Caco-2 (cell line): ENCODE measurements at regions of chr6 and their contacts with region 1.

Region 1: DNA sequence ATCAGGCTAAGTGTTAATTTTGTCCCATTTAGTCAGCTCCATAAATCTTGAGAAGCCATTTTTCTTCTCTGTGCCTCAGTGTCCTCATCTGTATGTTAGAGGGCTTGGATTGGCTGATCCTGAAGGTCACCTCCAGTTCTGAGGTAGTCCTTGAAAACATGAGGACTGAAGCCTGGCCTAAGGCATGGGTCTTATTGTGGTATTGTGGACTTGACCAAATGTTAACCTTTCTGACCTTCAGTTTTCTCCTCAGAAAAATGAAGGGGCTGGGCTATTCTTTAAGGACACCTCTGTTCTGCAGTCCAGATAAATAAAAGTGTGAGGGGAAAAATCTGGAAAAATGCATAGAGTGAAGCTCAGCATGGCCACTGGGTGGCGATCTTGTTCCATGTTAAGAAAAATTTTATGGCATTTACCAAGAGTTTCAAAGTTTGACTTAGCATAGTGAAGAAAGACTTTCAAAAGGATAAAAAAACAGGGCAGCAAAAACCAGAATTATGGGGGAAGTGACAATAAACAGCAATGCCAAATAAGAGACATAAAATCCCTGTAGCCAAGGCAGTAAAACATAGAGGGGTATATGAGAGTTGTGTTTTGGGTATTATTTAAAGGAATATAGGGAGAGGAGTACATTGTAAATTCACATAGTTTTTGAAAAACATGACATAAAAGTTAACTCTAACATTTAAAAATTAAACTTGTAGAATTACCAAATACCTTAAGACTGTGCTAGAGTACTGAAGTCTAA is 13.2 kb upstream of the TFB1M start:
- DNase-seq: peak; percentile 53 to 82
- H3K4me3 ChIP-seq: peak overlapping the region; percentile 39; the same call in 1 of the 2 replicates
- H3K4me3 Mint-ChIP-seq: peak overlapping the region; percentile 82
- H3K27ac Mint-ChIP-seq: peak overlapping the region; percentile 98
- H3K4me1 ChIP-seq: peaks cover 29% of the 10 kb centered on the region
- H3K4me1 Mint-ChIP-seq: peaks cover 25% of the 10 kb centered on the region
- H3K27me3 ChIP-seq: no peaks in the 10 kb centered on the region
- H3K27me3 Mint-ChIP-seq: no peaks in the 10 kb centered on the region
- CTCF ChIP-seq: peak; percentile 68 to 71

Region 2: GRCh38 chr6:155364844-155365437 is 37.4 kb after region 1 on chr6:
- CTCF ChIA-PET with region 1: no interaction called
- POLR2A ChIA-PET with region 1: no interaction called
- intact Hi-C with region 1: loop called (anchors 2 kb)
- DNase-seq: no peak
- H3K4me3 ChIP-seq: no peak overlapping the region
- H3K4me3 Mint-ChIP-seq: no peak overlapping the region
- H3K27ac Mint-ChIP-seq: no peak overlapping the region
- H3K4me1 ChIP-seq: no peaks in the 10 kb centered on the region
- H3K4me1 Mint-ChIP-seq: no peaks in the 10 kb centered on the region
- H3K27me3 ChIP-seq: no peaks in the 10 kb centered on the region
- H3K27me3 Mint-ChIP-seq: no peaks in the 10 kb centered on the region
- CTCF ChIP-seq: no peak

Region 3: DNA sequence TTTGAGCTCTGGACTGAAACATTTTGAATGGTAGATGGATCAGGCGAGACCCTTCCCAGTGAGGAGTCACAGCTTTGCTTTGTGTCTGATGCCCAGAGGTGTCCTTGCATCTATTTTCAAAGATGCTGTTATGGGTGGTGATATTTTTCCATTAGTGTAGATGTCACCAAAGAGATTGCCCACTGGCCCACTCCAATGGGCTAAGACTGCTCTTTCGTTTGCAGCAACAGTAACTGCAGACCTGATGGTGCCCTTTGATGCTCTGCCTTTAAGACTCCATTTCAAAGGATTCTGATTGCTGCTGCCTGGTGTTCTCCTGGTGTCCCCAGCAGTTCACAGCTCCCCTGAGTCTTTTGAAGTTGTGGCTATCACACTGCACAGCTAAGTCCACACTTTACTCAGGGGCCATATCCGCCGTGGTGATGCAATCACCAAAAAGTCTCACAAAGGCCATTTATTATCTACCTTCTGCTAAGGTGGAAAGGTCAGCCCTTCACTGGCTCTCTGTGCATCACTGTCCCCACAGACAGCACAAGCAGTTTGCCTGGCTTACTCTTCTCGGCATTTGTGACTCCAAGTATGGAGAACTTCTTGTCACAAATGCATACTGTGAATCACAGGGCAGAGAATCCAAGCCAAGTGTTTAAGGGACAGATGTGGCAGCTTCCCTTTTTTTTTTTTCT is 71.7 kb after region 1 on chr6:
- CTCF ChIA-PET with region 1: interaction called, 3 read pairs
- POLR2A ChIA-PET with region 1: interaction called, 3 read pairs
- intact Hi-C with region 1: loop called (anchors 1 kb)
- DNase-seq: peak; percentile 70 to 85
- H3K4me3 ChIP-seq: no peak overlapping the region
- H3K4me3 Mint-ChIP-seq: no peak overlapping the region
- H3K27ac Mint-ChIP-seq: peak overlapping the region; percentile 80
- H3K4me1 ChIP-seq: peaks cover 26% of the 10 kb centered on the region
- H3K4me1 Mint-ChIP-seq: peaks cover 26% of the 10 kb centered on the region
- H3K27me3 ChIP-seq: no peaks in the 10 kb centered on the region
- H3K27me3 Mint-ChIP-seq: no peaks in the 10 kb centered on the region
- CTCF ChIP-seq: no peak

Region 4: GRCh38 chr6:155493694-155494143 is 166.2 kb after region 1 on chr6:
- CTCF ChIA-PET with region 1: interaction called, 21 read pairs
- POLR2A ChIA-PET with region 1: no interaction called
- intact Hi-C with region 1: loop called (anchors 1 kb)
- DNase-seq: peak; percentile 40 to 48
- H3K4me3 ChIP-seq: no peak overlapping the region
- H3K4me3 Mint-ChIP-seq: no peak overlapping the region
- H3K27ac Mint-ChIP-seq: peak overlapping the region; percentile 11
- H3K4me1 ChIP-seq: peaks cover 24% of the 10 kb centered on the region
- H3K4me1 Mint-ChIP-seq: peaks cover 20% of the 10 kb centered on the region
- H3K27me3 ChIP-seq: no peaks in the 10 kb centered on the region
- H3K27me3 Mint-ChIP-seq: no peaks in the 10 kb centered on the region
- CTCF ChIP-seq: no peak

Region 5: GRCh38 chr6:155580904-155581303 is 253.4 kb after region 1 on chr6:
- CTCF ChIA-PET with region 1: no interaction called
- POLR2A ChIA-PET with region 1: no interaction called
- intact Hi-C with region 1: loop called (anchors 5 kb)
- DNase-seq: peak in 1 of 2 experiments; percentile 6
- H3K4me3 ChIP-seq: no peak overlapping the region
- H3K4me3 Mint-ChIP-seq: no peak overlapping the region
- H3K27ac Mint-ChIP-seq: no peak overlapping the region
- H3K4me1 ChIP-seq: peaks cover 12% of the 10 kb centered on the region; the same call in 1 of the 2 replicates
- H3K4me1 Mint-ChIP-seq: no peaks in the 10 kb centered on the region
- H3K27me3 ChIP-seq: no peaks in the 10 kb centered on the region
- H3K27me3 Mint-ChIP-seq: no peaks in the 10 kb centered on the region
- CTCF ChIP-seq: no peak

Region 6: DNA sequence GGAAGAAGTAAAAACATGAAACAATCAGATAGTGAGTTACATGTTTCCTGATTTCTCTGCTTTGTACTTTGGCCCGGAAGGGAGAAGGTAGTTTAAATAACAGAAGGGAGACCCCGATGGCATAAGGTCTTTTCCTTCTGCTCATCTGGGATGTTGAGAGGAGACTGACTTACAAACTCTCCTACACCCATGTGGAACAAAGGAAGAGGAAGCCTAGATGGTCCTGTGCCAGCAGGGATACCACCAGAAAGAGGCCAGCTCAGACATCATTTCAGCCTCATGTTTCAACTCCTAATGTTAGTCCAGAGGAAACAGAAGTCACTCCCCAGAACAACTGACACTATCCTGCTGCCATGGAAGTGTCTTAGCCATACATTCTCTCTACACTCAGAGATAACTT is 378.8 kb after region 1 on chr6:
- CTCF ChIA-PET with region 1: no interaction called
- POLR2A ChIA-PET with region 1: no interaction called
- intact Hi-C with region 1: loop called (anchors 10 kb)
- DNase-seq: no peak
- H3K4me3 ChIP-seq: no peak overlapping the region
- H3K4me3 Mint-ChIP-seq: no peak overlapping the region
- H3K27ac Mint-ChIP-seq: no peak overlapping the region
- H3K4me1 ChIP-seq: peaks cover 5% of the 10 kb centered on the region; the same call in 1 of the 2 replicates
- H3K4me1 Mint-ChIP-seq: no peaks in the 10 kb centered on the region
- H3K27me3 ChIP-seq: no peaks in the 10 kb centered on the region
- H3K27me3 Mint-ChIP-seq: no peaks in the 10 kb centered on the region
- CTCF ChIP-seq: no peak

Region 7: GRCh38 chr6:156564127-156564806 is 1236.8 kb after region 1 on chr6:
- CTCF ChIA-PET with region 1: no interaction called
- POLR2A ChIA-PET with region 1: no interaction called
- intact Hi-C with region 1: loop called (anchors 1 kb)
- DNase-seq: peak; percentile 45 to 73
- H3K4me3 ChIP-seq: no peak overlapping the region
- H3K4me3 Mint-ChIP-seq: no peak overlapping the region
- H3K27ac Mint-ChIP-seq: no peak overlapping the region
- H3K4me1 ChIP-seq: 0 out of 2 replicates have a peak, but pooled peaks cover 3% of the 10 kb centered on the region
- H3K4me1 Mint-ChIP-seq: no peaks in the 10 kb centered on the region
- H3K27me3 ChIP-seq: no peaks in the 10 kb centered on the region
- H3K27me3 Mint-ChIP-seq: peaks cover 9% of the 10 kb centered on the region
- CTCF ChIP-seq: peak; percentile 88